Activated naive CD4-positive, alpha-beta T cell treated with anti-CD3 and anti-CD28 coated beads, Interleukin-2, amount 10 ng/mL, durations not matched to agents 7 days and 5 days (primary cell): ENCODE measurements at regions of chr17 and their contacts with region 1.

Region 1: DNA sequence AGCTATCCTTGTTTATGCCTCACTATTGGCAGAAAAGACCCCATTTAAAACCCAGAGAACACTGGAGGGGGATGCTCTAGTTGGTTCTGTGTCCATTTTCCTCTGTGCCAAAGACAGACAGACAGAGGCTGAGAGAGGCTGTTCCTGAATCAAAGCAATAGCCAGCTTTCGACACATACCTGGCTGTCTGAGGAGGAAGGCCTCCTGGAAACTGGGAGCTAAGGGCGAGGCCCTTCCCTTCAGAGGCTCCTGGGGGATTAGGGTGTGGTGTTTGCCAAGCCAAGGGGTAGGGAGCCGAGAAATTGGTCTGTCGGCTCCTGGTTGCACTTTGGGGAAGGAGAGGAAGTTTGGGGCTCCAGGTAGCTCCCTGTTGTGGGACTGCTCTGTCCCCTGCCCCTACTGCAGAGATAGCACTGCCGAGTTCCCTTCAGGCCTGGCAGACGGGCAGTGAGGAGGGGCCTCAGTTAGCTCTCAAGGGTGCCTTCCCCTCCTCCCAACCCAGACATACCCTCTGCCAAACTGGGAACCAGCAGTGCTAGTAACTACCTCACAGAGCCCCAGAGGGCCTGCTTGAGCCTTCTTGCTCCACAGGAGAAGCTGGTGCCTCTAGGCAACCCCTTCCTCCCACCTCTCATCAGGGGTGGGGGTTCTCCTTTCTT is 56.1 kb downstream of the IGF2BP1 start:
- DNase-seq: no peak
- H3K4me3 Mint-ChIP-seq: no peak overlapping the region
- H3K27ac Mint-ChIP-seq: no peak overlapping the region
- H3K4me1 Mint-ChIP-seq: peaks cover 4% of the 10 kb centered on the region
- H3K27me3 Mint-ChIP-seq: peaks cover 34% of the 10 kb centered on the region

Region 2: GRCh38 chr17:49031965-49032928 is 21.1 kb before region 1 on chr17:
- CTCF ChIA-PET with region 1: interaction called, 11 read pairs
- DNase-seq: peak; percentile 58
- H3K4me3 Mint-ChIP-seq: no peak overlapping the region
- H3K27ac Mint-ChIP-seq: no peak overlapping the region
- H3K4me1 Mint-ChIP-seq: no peaks in the 10 kb centered on the region
- H3K27me3 Mint-ChIP-seq: peaks cover 36% of the 10 kb centered on the region

Region 3: DNA sequence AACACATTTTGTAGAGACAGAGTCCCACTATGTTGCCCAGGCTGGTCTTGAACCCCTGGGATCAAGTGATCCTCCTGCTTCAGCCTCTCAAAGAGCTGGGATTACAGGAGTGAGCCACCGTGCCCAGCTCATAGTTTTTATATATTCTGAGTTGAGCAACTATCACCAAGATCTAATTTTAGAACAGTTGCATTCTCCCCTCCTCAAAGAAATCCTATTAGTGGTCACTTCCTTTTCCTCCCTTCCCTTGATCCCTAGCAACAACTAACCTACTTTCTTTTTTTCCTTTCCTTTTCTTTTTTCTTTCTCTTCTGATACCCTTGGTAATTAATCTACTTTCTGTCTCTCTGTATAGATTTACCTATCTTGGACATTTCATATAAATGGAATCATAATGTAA is 17.8 kb after region 1 on chr17:
- CTCF ChIA-PET with region 1: no interaction called
- DNase-seq: no peak
- H3K4me3 Mint-ChIP-seq: no peak overlapping the region
- H3K27ac Mint-ChIP-seq: no peak overlapping the region
- H3K4me1 Mint-ChIP-seq: no peaks in the 10 kb centered on the region
- H3K27me3 Mint-ChIP-seq: peaks cover 24% of the 10 kb centered on the region

Region 4: GRCh38 chr17:49180303-49180702 is 127.0 kb after region 1 on chr17:
- CTCF ChIA-PET with region 1: no interaction called
- DNase-seq: peak; percentile 75
- H3K4me3 Mint-ChIP-seq: no peak overlapping the region
- H3K27ac Mint-ChIP-seq: no peak overlapping the region
- H3K4me1 Mint-ChIP-seq: peaks cover 9% of the 10 kb centered on the region
- H3K27me3 Mint-ChIP-seq: peaks cover 36% of the 10 kb centered on the region